SK-N-SH (cell line): ENCODE measurements at regions of chr22 and their contacts with region 1.

Region 1: DNA sequence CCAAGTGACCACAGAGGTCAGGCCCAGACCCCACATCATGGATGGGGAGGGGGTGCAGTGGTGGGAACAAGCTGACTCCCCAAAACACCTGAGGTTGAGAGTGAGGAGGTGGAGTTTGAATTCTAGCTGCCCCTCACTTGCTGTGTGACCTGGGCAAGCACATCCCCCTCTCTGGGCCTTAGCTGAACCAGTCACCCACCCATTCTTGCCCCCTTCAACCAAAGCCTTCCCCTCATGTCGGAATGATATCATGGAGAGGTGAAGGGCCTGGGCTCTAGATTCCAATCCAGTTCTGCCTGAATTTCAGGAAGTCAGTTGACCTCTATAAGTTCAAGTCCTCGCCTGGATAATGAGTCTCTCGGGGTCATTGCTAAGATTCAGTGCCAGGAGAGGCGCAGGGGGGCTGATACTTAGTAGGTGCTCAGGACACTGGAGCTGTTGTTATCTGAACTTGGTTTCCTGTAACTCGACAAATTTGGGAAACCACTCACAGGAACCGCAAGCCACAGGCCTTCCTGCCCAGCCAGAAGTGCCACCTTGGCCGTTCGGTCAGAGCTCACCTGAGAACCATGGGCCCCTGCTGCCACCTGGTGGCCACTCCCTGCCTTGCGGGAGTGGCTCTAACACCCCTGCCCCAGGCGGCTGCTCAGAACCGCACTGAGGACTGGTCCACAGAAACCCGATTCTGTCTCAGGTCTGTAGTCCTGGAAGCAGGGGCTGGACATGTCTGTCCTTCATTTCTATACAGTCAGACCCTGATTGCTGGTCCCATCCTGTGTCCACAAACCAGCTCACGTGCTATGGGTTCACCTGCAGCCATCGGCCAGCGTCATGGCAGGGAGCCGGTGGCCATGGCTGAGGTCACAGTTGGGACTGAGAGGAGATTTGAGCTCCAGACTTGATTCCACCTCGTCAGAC is 6.9 kb downstream of the CDC42EP1 start:
- DNase-seq: peak; percentile 91
- H3K4me3 ChIP-seq: no peak overlapping the region; a peak in 1 of 4 replicates
- H3K27ac ChIP-seq: no peak overlapping the region
- H3K4me1 ChIP-seq: peaks cover 0 to 24% of the 10 kb centered on the region in 2 experiments; a peak in 3 of 4 replicates
- H3K27me3 ChIP-seq: no peaks in the 10 kb centered on the region
- CTCF ChIP-seq: peak; percentile 87
- EP300 ChIP-seq: no peak
- RAD21 ChIP-seq: peak; percentile 95

Region 2: DNA sequence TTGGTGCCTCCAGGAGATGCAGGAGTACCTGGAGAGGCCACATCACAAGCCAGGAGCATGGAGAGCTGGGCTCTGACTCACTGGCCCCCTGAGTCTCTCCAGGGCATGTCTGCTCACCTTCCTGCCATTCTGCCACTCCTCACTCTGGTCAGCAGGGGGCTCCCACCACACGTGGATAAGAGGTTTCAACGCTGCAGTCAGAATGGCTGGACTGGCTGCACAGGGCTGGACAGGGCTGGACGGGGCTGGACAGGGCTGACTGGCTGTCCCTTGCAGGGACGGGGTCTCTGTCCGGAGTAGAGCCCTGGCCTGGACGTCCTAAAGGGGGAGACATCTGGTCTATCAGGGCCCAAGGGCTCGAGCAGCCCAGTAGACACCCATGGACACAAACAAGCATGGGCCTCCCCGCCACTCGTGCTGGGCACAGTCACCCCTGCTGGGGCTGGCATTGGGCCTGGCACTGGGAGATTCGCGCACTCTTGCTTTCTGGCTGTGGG is 250.2 kb before region 1 on chr22:
- CTCF ChIA-PET with region 1: interaction called, 23 read pairs
- POLR2A ChIA-PET with region 1: no interaction called
- DNase-seq: peak; percentile 92
- H3K4me3 ChIP-seq: no peak overlapping the region; a peak in 1 of 4 replicates
- H3K27ac ChIP-seq: no peak overlapping the region
- H3K4me1 ChIP-seq: no peaks in the 10 kb centered on the region
- H3K27me3 ChIP-seq: no peaks in the 10 kb centered on the region
- CTCF ChIP-seq: peak; percentile 90
- EP300 ChIP-seq: no peak
- RAD21 ChIP-seq: peak; percentile 99

Region 3: GRCh38 chr22:37462983-37463382 is 104.2 kb before region 1 on chr22:
- CTCF ChIA-PET with region 1: interaction called, 21 read pairs
- POLR2A ChIA-PET with region 1: no interaction called
- DNase-seq: no peak
- H3K4me3 ChIP-seq: no peak overlapping the region
- H3K27ac ChIP-seq: peak overlapping the region in 1 of 2 experiments; percentile 78; a peak in 2 of 4 replicates
- H3K4me1 ChIP-seq: peaks cover 0 to 27% of the 10 kb centered on the region in 2 experiments; a peak in 1 of 4 replicates
- H3K27me3 ChIP-seq: 0 out of 2 replicates have a peak, but pooled peaks cover 7% of the 10 kb centered on the region
- CTCF ChIP-seq: no peak
- EP300 ChIP-seq: no peak
- RAD21 ChIP-seq: no peak

Region 4: DNA sequence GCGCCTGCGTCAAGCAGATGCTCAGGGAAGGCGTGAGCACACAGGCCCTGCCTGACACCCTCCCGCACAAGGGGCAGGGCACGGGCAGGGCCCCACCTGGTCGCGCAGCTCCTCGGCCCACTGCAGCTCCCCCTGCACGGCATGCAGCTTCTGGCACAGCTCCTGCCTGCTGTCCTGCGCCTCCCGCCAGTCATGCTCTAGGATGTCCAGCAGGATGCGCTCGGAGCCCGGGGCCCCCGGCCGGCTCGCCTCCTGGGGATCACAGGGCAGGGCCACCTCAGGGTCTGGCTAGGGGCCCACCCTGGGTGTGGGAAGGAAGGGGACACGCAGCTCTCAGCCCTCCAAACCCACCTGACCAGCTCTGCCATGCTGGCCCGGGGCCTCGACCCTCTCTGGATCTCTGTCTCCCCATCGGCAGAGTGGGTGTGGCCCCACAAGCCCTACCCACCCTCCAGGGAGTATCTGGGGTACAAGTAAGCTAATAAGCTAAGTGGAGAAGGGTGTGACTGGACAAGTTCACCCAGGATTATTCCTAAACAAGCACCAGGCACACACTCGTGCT is 58.6 kb before region 1 on chr22:
- CTCF ChIA-PET with region 1: interaction called, 10 read pairs
- POLR2A ChIA-PET with region 1: no interaction called
- DNase-seq: no peak
- H3K4me3 ChIP-seq: no peak overlapping the region
- H3K27ac ChIP-seq: peak overlapping the region in 1 of 2 experiments; percentile 62; a peak in 1 of 4 replicates
- H3K4me1 ChIP-seq: peaks cover 0 to 20% of the 10 kb centered on the region in 2 experiments; a peak in 1 of 4 replicates
- H3K27me3 ChIP-seq: no peaks in the 10 kb centered on the region
- CTCF ChIP-seq: no peak
- EP300 ChIP-seq: no peak
- RAD21 ChIP-seq: no peak

Region 5: GRCh38 chr22:37538590-37539357 is 28.4 kb before region 1 on chr22:
- CTCF ChIA-PET with region 1: interaction called, 647 read pairs
- POLR2A ChIA-PET with region 1: interaction called, 3 read pairs
- DNase-seq: peak; percentile 93
- H3K4me3 ChIP-seq: peak overlapping the region in 1 of 2 experiments; percentile 40; a peak in 1 of 4 replicates
- H3K27ac ChIP-seq: no peak overlapping the region
- H3K4me1 ChIP-seq: peaks cover 10 to 11% of the 10 kb centered on the region in 2 experiments; a peak in 3 of 4 replicates
- H3K27me3 ChIP-seq: no peaks in the 10 kb centered on the region
- CTCF ChIP-seq: peak; percentile 98
- EP300 ChIP-seq: no peak
- RAD21 ChIP-seq: peak; percentile 100

Region 6: DNA sequence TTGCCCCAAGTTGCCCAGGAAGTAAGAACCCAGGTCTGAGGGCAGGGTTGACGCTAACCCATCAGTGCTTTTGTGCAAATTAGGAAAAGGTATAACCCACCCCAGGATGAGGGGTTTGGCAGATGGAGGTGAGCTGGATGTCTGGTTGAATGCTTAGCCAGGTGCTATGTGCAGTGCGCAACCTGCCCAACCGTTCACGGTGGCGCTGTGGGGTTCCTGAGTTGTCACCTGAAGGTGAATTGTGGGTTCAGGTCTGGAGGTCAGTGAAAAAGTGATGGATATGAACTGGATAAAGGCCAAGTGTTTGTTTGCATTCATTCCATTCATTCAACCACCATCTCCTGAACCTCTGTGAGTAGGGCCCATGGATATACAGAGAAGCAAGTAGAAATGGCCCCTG is 27.1 kb after region 1 on chr22:
- CTCF ChIA-PET with region 1: interaction called, 47 read pairs
- POLR2A ChIA-PET with region 1: no interaction called
- DNase-seq: no peak
- H3K4me3 ChIP-seq: no peak overlapping the region
- H3K27ac ChIP-seq: no peak overlapping the region
- H3K4me1 ChIP-seq: no peaks in the 10 kb centered on the region
- H3K27me3 ChIP-seq: no peaks in the 10 kb centered on the region; the same call in 1 of the 2 replicates
- CTCF ChIP-seq: no peak
- EP300 ChIP-seq: no peak
- RAD21 ChIP-seq: no peak